MCF 10A (cell line): ENCODE measurements at regions of chr1 and their contacts with region 1.

Region 1: DNA sequence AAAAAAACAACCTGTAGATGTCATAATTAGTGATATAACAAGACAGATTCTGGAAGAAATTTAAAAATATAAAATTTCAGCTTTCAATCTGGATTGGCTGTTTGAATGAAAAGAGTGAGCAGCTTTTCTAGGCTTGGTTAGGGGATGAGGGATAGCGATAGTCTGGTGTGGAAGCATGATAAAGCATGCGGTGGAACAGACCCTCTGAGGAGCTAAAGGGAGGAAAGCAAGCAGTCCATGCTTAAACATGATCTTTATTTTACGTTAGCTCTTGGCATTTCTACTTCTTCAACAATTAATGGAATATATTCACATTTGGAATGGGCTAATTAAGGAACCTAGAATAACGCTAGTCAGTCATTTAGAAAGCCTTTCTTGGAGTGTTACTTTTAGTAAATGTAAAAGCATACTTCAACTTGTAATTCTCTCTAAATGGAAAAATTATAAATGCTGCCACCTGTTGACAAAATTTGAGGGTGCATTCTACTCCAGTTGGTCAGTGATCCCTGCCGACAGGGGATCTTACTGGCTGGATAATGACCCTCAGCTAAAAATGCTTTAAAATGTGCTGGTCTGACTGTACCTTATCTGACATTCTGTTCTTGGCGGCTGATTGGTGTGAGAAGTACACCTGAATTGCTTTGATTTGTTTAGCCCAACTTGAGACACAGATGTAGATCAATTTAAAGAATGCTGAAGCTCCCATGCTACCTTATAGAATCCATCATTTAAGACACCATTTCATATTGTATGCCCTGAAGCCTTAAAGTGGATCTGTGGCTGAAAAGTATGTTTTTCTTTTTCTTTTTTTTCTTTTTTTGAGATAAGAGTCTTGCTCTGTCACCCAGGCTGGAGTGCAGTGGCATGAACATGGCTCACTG is 61.2 kb downstream of the AK4 start:
- DNase-seq: peak; percentile 61
- H3K4me3 Mint-ChIP-seq: no peak overlapping the region
- H3K27ac Mint-ChIP-seq: no peak overlapping the region
- H3K4me1 Mint-ChIP-seq: no peaks in the 10 kb centered on the region
- H3K27me3 Mint-ChIP-seq: no peaks in the 10 kb centered on the region
- CTCF ChIP-seq: peak; percentile 56

Region 2: DNA sequence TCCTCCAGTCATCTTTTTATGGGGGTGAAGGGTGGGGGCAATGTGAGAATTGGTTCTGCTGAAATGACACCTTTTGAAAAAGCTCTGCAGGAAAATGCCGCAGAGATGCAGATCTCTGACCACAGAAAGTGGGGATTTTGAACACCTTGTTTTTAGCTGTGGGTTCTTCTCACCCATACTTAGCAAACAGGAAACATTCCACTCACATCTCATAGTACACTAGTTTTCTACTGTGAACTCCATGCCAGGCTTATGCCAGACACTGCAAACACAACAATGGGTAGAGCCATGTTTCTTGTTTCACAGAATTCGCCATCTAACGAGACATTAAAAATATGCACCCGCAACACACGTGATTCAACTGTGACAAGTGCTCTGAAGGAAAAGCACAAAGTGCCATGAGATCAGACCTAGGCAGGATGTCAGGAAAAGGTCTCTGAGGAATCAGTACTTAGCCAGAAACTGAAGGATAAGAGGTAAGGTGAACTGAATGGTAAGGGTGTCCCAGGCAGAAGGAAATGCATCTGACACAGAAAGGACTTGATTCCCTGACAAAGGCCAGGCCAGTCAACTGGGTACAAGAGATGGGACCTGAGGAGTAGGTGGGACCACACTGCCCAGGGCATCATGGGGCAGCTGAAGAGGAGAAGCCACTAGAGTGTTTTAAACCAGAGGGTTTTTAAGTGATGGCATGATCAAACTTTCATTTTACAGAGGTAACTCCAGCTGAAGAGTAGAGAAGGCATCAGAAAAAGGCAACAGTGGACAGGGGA is 159.1 kb before region 1 on chr1:
- CTCF ChIA-PET with region 1: interaction called, 13 read pairs
- POLR2A ChIA-PET with region 1: no interaction called
- intact Hi-C with region 1: no loop called
- DNase-seq: no peak
- H3K4me3 Mint-ChIP-seq: no peak overlapping the region
- H3K27ac Mint-ChIP-seq: no peak overlapping the region
- H3K4me1 Mint-ChIP-seq: peaks cover 8% of the 10 kb centered on the region
- H3K27me3 Mint-ChIP-seq: no peaks in the 10 kb centered on the region
- CTCF ChIP-seq: no peak

Region 3: DNA sequence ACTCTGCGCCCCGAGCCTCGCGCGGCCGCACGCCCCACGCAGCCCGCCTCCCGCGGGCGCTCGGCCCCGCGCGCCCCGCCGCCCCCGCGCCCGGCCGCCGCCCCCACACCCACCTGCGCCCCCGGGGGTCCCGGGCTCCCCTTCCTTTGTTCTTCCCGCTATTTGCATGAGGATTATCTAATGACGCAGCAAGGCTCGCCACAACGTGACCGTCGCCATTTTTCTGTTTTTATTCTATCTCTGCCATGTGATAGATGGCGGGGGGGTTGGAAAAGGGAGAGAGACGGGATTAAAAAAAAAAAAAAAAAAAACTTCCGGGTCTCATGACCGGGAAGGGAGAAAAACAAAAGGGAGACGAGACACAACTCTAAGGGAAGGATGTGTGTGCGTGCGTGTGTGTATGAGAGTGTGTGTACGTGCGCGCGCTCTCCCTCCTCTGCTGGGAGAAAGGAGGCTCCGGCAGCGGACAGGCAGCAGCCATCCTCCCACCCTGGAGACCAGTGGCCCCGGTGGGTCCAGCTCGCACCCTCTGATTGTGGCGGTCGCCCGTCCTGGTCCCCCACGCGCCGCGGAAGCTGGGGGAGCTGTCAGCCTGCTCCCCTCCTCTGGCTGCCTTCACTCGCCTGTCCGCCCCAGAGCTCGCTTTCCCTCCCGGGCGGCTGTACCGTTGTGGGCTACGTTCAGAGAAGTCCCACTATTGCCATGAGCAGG is 141.6 kb before region 1 on chr1:
- CTCF ChIA-PET with region 1: interaction called, 101 read pairs
- POLR2A ChIA-PET with region 1: interaction called, 11 read pairs
- intact Hi-C with region 1: no loop called
- DNase-seq: peak; percentile 70
- H3K4me3 Mint-ChIP-seq: peak overlapping the region; percentile 77
- H3K27ac Mint-ChIP-seq: peak overlapping the region; percentile 92
- H3K4me1 Mint-ChIP-seq: peaks cover 13% of the 10 kb centered on the region
- H3K27me3 Mint-ChIP-seq: no peaks in the 10 kb centered on the region
- CTCF ChIP-seq: no peak

Region 4: GRCh38 chr1:65148548-65149350 is 60.5 kb before region 1 on chr1:
- CTCF ChIA-PET with region 1: interaction called, 27 read pairs
- POLR2A ChIA-PET with region 1: interaction called, 8 read pairs
- intact Hi-C with region 1: loop called (anchors 2 kb)
- DNase-seq: peak; percentile 58
- H3K4me3 Mint-ChIP-seq: peak overlapping the region; percentile 79
- H3K27ac Mint-ChIP-seq: peak overlapping the region; percentile 6
- H3K4me1 Mint-ChIP-seq: peaks cover 23% of the 10 kb centered on the region
- H3K27me3 Mint-ChIP-seq: no peaks in the 10 kb centered on the region
- CTCF ChIP-seq: no peak

Region 5: DNA sequence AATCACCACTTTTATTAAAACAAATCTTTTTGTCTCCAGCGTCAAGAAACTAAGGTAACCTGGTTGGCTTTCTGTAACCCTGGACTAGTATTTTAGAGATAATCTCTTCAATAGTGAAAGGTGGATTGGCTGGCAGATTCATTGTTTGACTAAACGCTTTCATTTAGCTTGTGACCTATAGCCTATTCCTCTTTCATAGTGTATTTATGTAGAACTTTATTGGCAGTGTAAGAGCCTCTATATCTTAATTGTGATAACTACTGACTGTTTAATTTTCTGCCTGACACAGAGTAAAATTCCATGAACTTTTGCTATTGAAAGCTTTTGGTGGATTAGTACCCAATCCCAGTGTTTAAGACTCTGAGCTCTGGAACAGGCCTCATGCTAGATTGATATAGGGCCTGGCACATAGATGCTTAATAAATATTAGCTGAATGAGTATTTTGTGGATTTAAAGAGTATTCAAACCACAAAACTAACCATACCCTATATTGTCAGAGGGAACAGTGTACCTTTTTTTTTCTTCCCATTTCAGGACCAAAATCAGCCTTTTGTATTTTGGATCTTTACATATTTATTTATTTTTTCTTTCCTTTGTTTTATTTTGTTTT is 26.5 kb before region 1 on chr1:
- CTCF ChIA-PET with region 1: interaction called, 29 read pairs
- POLR2A ChIA-PET with region 1: interaction called, 4 read pairs
- intact Hi-C with region 1: no loop called
- DNase-seq: no peak
- H3K4me3 Mint-ChIP-seq: no peak overlapping the region
- H3K27ac Mint-ChIP-seq: no peak overlapping the region
- H3K4me1 Mint-ChIP-seq: peaks cover 24% of the 10 kb centered on the region
- H3K27me3 Mint-ChIP-seq: no peaks in the 10 kb centered on the region
- CTCF ChIP-seq: no peak

Region 6: DNA sequence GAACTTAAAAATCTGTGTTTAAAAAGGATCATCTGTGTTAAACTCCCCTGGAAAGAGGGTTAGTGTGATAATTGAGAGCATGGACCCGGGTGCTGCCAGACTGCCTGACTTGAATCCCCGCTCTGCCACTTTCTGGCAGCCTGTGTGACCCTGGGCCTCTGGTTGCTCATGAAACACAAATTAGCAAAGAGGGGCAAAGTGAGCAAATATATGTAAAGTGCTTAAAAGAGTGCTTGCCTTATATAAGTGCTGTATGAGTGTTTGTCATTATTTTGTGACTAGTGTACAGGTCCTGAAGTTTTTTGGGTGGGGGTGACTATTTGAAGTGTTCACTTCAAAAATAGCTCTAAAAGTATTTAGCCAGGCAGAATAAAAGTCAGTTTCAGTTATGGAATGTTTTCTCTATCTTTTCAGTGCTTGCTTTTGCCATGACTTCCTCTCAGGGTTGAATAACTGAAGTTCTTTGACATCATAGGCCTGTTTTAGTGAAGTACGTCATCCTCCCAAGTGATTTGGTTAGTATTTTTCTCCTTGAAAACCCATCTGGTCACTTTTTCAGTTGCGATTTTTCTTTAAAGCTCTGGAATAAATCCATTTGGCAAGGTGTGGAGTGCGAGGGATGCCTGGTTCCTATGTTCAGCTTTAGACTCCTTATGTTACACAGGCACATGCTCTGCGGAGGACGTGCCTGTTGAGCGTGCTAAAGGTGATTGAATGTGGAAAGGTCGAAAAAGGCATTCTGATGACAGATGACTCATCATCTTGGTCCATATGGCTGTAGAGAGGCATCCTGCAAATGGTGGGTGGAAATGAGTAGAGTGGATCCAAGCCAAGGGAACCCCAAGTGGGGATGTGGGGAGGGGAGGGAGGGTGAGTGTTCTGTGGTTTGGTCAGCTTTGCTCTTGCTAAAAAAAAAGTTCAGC is 13.5 kb before region 1 on chr1:
- CTCF ChIA-PET with region 1: interaction called, 16 read pairs
- POLR2A ChIA-PET with region 1: interaction called, 4 read pairs
- intact Hi-C with region 1: no loop called
- DNase-seq: no peak
- H3K4me3 Mint-ChIP-seq: no peak overlapping the region
- H3K27ac Mint-ChIP-seq: peak overlapping the region; percentile 37
- H3K4me1 Mint-ChIP-seq: no peaks in the 10 kb centered on the region
- H3K27me3 Mint-ChIP-seq: no peaks in the 10 kb centered on the region
- CTCF ChIP-seq: no peak